ENCODE measurements at regions of chr1 and their contacts with region 1.

Region 1: DNA sequence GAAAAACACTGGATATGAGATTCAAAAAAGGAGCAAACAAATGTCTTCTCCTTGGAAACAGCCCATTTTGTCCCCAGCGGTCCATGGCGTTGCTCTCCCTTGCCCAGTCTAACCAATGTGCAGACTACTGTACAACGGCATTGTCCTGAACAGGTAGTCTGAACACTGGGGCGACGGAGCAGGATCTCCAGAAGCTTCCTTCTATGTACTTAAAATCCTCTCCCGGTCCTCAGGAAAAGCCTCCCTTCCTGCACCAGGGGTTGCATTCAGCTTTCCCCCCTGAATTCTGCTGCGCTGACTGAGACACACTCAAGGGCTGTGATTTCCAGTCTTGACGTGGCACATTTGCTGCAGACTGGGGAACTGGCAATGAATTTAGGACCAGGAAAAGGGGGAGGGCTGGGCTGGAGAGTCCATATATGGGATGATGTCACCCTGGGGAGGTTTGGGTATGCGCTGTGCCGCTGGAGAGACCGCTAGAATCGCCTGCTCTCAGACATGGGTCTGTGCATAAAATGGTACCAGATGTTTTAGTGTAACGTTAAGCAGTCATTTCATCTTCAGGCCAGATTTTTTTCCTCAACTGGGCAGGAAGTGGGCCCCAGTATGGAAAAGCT is 275.9 kb upstream of the C1orf105 start:
- DNase-seq: peak; percentile 61
- H3K4me3 ChIP-seq: peak overlapping the region; percentile 27 to 43 (median 40)
- H3K27ac ChIP-seq: peak overlapping the region; percentile 82 to 88 (median 84)
- H3K4me1 ChIP-seq: peaks cover 0 to 14% (median 3%) of the 10 kb centered on the region in 4 donors
- H3K27me3 ChIP-seq: no peaks in the 10 kb centered on the region
- CTCF ChIP-seq: no peak
- EP300 ChIP-seq: no peak
- POLR2A ChIP-seq: peak; percentile 67

Region 2: DNA sequence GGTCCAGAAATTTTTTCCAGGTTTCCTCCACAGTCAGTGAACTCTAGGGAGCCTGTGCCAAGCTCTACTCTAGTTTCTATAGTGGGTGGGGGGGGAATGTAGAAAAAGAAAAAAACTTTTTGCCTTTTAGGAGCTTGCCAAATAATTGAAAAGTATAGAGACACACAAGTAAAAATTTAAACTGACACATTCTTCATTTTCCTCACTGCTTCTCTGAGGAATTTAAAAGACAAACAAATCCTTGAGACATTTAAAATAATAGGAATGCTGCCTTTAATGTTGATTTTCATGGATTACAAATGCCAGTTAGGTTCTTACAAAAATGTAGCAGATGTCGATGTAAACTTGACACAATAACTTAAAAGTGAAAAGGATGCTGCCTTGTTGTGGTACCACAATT is 61.4 kb before region 1 on chr1:
- in situ Hi-C with region 1: no loop called
- intact Hi-C with region 1: no loop called
- DNase-seq: no peak
- H3K4me3 ChIP-seq: no peak overlapping the region
- H3K27ac ChIP-seq: no peak overlapping the region
- H3K4me1 ChIP-seq: no peaks in the 10 kb centered on the region
- H3K27me3 ChIP-seq: no peaks in the 10 kb centered on the region
- CTCF ChIP-seq: no peak
- EP300 ChIP-seq: no peak
- POLR2A ChIP-seq: no peak

Region 3: DNA sequence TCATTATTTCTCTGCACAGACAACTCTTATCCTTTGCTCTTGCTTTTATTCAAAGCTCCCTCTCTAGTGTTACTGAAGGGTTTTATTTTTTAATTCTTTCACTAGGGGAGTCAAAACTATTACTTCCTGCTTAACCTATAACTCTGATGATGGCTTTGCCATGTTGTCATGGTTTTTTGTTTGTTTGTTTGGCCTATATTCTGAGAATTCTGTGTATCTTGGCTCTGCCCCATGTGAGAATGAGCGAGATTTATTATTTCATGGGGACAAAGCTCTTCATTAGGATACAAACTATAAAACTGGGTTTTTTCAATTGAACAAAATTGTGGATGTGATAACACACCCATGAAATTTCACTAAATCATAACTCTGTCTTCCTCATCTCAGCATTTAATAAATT is 85.4 kb after region 1 on chr1:
- in situ Hi-C with region 1: no loop called
- intact Hi-C with region 1: no loop called
- DNase-seq: no peak
- H3K4me3 ChIP-seq: no peak overlapping the region
- H3K27ac ChIP-seq: no peak overlapping the region
- H3K4me1 ChIP-seq: no peaks in the 10 kb centered on the region
- H3K27me3 ChIP-seq: no peaks in the 10 kb centered on the region
- CTCF ChIP-seq: no peak
- EP300 ChIP-seq: no peak
- POLR2A ChIP-seq: no peak

Region 4: DNA sequence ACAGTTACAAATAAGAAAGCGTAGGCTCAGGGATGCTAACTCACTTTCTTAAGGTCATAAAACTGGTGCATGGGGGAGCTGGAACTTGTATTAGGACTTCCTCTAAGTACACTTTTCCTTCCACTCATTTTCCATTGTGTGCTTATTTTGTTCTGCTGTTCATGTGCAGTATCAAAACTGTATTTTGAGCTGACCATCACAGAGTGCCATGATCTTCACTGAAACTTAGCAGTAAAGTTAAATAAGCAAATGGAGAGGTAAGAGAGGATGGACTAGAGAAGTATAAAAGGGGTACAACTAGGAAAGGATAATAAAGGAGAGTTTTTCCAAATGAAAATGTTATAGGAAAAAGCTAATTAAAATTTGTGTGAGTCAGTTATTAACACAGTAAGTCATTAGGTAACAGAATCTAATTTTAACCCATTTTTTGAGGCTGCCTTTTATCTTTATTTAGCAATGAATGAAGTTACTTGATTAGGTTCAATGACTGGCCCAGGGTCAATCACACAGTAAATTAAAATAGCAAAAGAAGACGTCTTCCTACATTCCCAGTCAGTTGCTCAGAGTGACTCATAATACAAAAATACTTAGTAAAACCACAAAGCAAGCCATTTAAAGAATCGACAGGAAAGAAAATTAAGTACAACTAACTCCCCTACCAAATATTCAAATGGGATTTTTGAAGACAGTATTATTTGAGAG is 110.1 kb after region 1 on chr1:
- in situ Hi-C with region 1: no loop called
- intact Hi-C with region 1: no loop called
- DNase-seq: no peak
- H3K4me3 ChIP-seq: no peak overlapping the region
- H3K27ac ChIP-seq: no peak overlapping the region
- H3K4me1 ChIP-seq: peaks cover 0 to 11% (median 0%) of the 10 kb centered on the region in 4 donors
- H3K27me3 ChIP-seq: no peaks in the 10 kb centered on the region
- CTCF ChIP-seq: no peak
- EP300 ChIP-seq: no peak
- POLR2A ChIP-seq: no peak

Region 5: GRCh38 chr1:172357753-172358385 is 213.3 kb after region 1 on chr1:
- in situ Hi-C with region 1: no loop called
- intact Hi-C with region 1: loop called (anchors 1 kb)
- DNase-seq: no peak
- H3K4me3 ChIP-seq: peak overlapping the region in 1 of 4 donors; percentile 26
- H3K27ac ChIP-seq: peak overlapping the region; percentile 82 to 91 (median 90)
- H3K4me1 ChIP-seq: peaks cover 40 to 72% (median 53%) of the 10 kb centered on the region in 4 donors
- H3K27me3 ChIP-seq: no peaks in the 10 kb centered on the region
- CTCF ChIP-seq: no peak
- EP300 ChIP-seq: no peak
- POLR2A ChIP-seq: no peak

Measured in transverse colon (tissue), 4 donors.